Activated CD4-positive, alpha-beta memory T cell treated with anti-CD3 and anti-CD28 coated beads, Interleukin-2, amount 10 ng/mL, durations not matched to agents 7 days and 5 days (primary cell): ENCODE measurements at regions of chr3 and their contacts with region 1.

Region 1: GRCh38 chr3:129249276-129250065 is at the start of gene COPG1:
- DNase-seq: peak; percentile 90
- H3K4me3 Mint-ChIP-seq: peak within 1 kb of the TSS; percentile 86
- H3K27ac Mint-ChIP-seq: peak within 1 kb of the TSS; percentile 92
- H3K4me1 Mint-ChIP-seq: peaks cover 63% of the 10 kb centered on the region
- H3K27me3 Mint-ChIP-seq: no peaks in the 10 kb centered on the region
- total RNA-seq, gene COPG1: 157 TPM

Region 2: DNA sequence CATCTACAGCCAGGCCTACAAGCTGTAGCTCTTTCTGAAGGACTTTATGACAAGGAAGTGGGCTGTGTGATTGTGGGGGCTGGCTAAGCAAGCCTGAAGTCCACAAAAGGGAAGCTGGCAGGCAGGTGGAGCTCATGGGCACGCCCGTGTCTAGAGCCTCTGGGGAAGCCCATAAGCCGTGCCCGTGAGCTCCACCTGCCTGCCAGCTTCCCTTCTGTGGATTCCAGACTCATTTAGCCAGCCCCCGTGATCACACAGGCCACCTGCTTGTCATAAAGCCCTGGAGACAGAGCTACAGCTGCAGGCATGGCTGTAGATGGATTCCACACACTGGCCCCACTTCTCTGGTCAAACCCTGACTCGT is 233.1 kb before region 1 on chr3:
- CTCF ChIA-PET with region 1: interaction called, 15 read pairs
- POLR2A ChIA-PET with region 1: interaction called, 25 read pairs
- DNase-seq: peak; percentile 68
- H3K4me3 Mint-ChIP-seq: peak overlapping the region; percentile 64
- H3K27ac Mint-ChIP-seq: peak overlapping the region; percentile 87
- H3K4me1 Mint-ChIP-seq: peaks cover 37% of the 10 kb centered on the region
- H3K27me3 Mint-ChIP-seq: no peaks in the 10 kb centered on the region

Region 3: DNA sequence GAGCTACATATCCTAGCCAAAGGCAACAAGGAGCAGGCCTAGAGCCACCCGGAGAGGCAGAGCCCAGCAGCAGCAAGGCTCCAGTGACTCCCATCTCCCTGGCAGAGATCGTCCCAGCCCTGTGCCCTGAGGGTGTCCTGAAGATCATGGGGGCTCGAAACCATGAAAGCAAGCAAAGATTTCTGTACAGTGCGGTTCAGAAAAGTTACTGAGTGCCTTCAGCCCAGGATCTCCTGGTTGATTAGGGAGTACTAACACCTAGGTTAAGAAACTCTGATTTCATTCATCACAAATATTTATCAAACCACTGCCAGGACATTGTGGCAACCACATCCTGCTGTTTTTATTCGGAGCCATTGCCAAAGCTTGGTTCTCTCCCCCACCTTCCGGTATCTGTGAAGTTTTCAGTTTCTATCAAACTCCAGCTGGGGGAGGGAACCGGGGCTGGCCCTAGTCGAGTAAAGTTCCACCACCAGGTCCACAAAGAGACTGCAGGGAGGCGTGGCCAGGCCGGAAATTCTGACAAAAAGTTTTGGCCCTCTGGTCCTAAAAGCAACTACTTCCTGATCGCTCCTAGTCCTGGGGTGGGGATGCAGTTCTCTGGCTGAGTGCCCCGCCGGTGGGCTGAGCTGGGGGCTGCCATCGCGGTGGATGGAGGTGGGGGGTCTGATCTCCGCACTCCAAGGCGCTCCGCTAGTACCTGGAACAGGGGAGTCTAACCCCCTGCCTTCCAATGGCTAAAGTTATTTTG is 129.0 kb before region 1 on chr3:
- CTCF ChIA-PET with region 1: interaction called, 7 read pairs
- POLR2A ChIA-PET with region 1: interaction called, 90 read pairs
- DNase-seq: peak; percentile 96
- H3K4me3 Mint-ChIP-seq: peak overlapping the region; percentile 91
- H3K27ac Mint-ChIP-seq: peak overlapping the region; percentile 96
- H3K4me1 Mint-ChIP-seq: peaks cover 53% of the 10 kb centered on the region
- H3K27me3 Mint-ChIP-seq: no peaks in the 10 kb centered on the region

Region 4: DNA sequence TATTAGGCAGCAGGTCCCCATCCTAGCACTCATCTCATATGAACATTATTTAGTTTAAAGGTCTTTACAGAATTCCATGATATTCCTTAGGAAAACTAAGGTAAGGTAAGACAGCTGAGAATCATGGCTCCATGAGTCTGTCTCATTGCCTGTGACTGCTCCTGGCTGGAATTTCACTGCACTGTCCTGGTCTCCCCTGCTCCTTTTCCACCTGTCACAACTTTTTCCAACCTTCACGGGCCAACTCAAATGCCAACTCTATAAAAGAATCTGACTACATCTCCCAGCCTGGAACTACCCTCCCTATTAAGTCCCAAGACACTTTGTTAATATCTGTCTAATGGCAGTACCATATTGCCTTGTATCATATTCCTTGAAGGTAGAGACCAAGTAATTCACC is 73.4 kb before region 1 on chr3:
- CTCF ChIA-PET with region 1: interaction called, 71 read pairs
- POLR2A ChIA-PET with region 1: interaction called, 393 read pairs
- DNase-seq: no peak
- H3K4me3 Mint-ChIP-seq: no peak overlapping the region
- H3K27ac Mint-ChIP-seq: no peak overlapping the region
- H3K4me1 Mint-ChIP-seq: peaks cover 81% of the 10 kb centered on the region
- H3K27me3 Mint-ChIP-seq: no peaks in the 10 kb centered on the region

Region 5: DNA sequence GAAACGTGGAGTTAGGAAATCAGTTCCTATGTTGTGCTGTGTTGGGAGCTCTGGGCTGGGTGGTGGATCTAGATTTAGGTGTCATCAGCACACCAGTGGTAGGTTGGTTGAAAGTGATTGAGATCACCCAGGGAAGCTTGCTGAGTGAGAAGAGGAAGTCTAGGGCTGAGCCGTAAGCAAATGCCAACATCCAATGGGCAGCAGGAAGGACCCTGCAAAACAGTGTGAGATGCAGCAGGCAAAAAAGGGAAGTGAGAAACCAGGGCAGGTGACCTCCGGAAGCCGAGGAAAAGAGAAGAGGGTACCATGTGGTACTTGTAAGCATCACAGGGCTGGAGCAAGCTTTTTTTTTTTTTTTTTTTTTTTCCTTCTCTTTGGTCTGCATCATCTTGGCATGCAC is 15.9 kb before region 1 on chr3:
- CTCF ChIA-PET with region 1: interaction called, 28 read pairs
- POLR2A ChIA-PET with region 1: interaction called, 62 read pairs
- DNase-seq: no peak
- H3K4me3 Mint-ChIP-seq: no peak overlapping the region
- H3K27ac Mint-ChIP-seq: peak overlapping the region; percentile 64
- H3K4me1 Mint-ChIP-seq: peaks cover 77% of the 10 kb centered on the region
- H3K27me3 Mint-ChIP-seq: no peaks in the 10 kb centered on the region

Region 6: GRCh38 chr3:129389572-129389937 is 140.1 kb after region 1 on chr3:
- CTCF ChIA-PET with region 1: no interaction called
- POLR2A ChIA-PET with region 1: no interaction called
- DNase-seq: no peak
- H3K4me3 Mint-ChIP-seq: no peak overlapping the region
- H3K27ac Mint-ChIP-seq: no peak overlapping the region
- H3K4me1 Mint-ChIP-seq: no peaks in the 10 kb centered on the region
- H3K27me3 Mint-ChIP-seq: no peaks in the 10 kb centered on the region

Region 7: DNA sequence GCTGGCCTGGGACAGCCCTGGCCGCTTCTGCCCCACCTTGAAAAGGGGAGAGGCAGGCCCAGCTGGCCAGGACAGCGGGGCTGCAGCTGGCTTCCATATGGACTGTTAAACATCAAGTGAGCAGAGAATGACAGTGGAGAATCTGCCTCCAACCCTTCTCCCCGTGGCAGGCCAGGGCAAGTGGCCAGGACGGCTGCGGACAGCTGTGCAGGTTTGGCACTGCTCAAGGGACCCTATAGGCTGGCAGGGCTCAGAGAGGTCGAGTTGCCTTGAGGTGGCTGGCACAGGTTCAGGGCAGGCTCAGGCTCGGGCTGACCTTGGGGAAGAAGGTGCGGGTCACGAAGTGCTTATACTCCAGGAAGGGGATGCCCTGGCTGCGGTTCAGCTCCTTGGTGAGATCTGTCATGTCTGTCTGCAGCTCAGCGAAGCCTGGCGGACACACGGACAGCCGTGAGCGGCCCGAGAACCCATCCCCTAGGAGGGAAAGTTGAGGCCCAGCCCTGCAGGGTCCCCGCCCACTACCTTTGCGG is 317.8 kb after region 1 on chr3:
- CTCF ChIA-PET with region 1: no interaction called
- POLR2A ChIA-PET with region 1: no interaction called
- DNase-seq: no peak
- H3K4me3 Mint-ChIP-seq: no peak overlapping the region
- H3K27ac Mint-ChIP-seq: no peak overlapping the region
- H3K4me1 Mint-ChIP-seq: peaks cover 2% of the 10 kb centered on the region
- H3K27me3 Mint-ChIP-seq: peaks cover 2% of the 10 kb centered on the region